Caco-2 (cell line): ENCODE measurements at regions of chr10 and their contacts with region 1.

Region 1: DNA sequence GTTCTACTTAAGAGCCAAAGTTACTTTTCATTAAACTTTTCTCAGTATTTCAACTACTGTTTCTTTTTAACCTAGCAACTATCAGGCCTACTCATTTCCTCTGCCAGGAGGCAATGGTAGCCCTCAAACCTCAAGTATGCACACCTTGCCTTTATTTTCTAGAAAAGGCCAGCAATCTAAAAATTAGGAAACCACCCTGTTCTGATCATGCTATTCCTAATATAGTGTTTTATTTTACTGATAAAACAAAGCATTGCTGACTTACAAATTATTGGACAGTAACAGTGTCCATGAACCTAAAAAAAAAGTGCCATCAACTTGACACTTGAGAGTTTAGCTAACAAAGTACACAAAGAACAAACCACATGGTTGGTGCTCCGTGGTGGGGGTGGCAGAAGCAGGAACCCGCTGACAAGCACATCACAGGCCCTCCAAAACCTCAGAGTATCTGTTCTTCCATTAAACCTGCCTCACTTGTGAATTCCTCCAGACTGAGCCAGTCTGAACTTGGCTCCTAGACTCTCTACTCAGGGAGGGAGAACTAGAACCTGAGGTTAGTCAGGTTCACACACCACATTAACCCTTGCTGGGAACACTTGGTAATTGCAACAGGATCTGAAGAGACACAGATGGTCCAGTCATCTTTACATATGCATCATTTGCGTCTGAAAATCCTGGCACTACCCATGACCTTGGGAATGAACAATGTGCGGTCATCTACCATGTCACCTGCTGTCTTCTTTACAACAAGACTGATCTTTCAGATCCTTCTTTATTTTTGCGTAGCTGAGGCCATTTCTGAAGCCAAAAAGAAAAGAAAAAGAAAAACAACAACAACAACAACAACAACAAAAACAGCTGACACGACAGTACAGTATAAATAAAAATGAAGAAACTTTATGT is 31.9 kb downstream of the PIP4K2A start:
- DNase-seq: no peak
- H3K4me3 ChIP-seq: no peak overlapping the region
- H3K4me3 Mint-ChIP-seq: peak overlapping the region; percentile 65
- H3K27ac Mint-ChIP-seq: peak overlapping the region; percentile 76
- H3K4me1 ChIP-seq: peaks cover 43% of the 10 kb centered on the region
- H3K4me1 Mint-ChIP-seq: peaks cover 37% of the 10 kb centered on the region
- H3K27me3 ChIP-seq: no peaks in the 10 kb centered on the region
- H3K27me3 Mint-ChIP-seq: no peaks in the 10 kb centered on the region
- CTCF ChIP-seq: no peak

Region 2: GRCh38 chr10:22391600-22391999 is 290.9 kb before region 1 on chr10:
- CTCF ChIA-PET with region 1: no interaction called
- POLR2A ChIA-PET with region 1: no interaction called
- intact Hi-C with region 1: no loop called
- DNase-seq: no peak
- H3K4me3 ChIP-seq: no peak overlapping the region
- H3K4me3 Mint-ChIP-seq: no peak overlapping the region
- H3K27ac Mint-ChIP-seq: peak overlapping the region; percentile 48
- H3K4me1 ChIP-seq: peaks cover 4% of the 10 kb centered on the region
- H3K4me1 Mint-ChIP-seq: peaks cover 24% of the 10 kb centered on the region
- H3K27me3 ChIP-seq: no peaks in the 10 kb centered on the region; the same call in 1 of the 2 replicates
- H3K27me3 Mint-ChIP-seq: no peaks in the 10 kb centered on the region
- CTCF ChIP-seq: no peak

Region 3: DNA sequence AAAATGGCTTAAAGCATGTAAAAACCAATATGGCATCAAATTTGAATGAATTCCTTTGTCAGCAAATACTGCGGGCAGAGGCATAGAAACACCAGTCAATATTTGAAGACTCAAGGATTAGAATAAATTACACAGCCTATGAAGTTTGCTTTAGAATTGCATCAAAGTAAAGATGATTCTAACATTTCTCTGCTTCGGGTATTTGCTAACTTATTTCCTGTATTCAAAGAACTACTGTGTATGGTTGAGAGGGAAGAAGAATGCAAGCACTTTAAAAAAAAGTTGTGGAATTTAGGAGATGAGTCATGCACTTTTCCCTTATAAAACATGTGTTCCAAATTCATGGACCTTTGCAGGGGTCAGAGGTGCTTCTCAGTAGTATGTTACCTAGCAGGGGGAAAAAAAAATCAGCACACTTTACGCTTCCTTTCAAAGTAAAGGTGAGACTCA is 58.2 kb before region 1 on chr10:
- CTCF ChIA-PET with region 1: no interaction called
- POLR2A ChIA-PET with region 1: no interaction called
- intact Hi-C with region 1: loop called (anchors 2 kb)
- DNase-seq: peak in 1 of 2 experiments; percentile 61
- H3K4me3 ChIP-seq: no peak overlapping the region
- H3K4me3 Mint-ChIP-seq: peak overlapping the region; percentile 25
- H3K27ac Mint-ChIP-seq: peak overlapping the region; percentile 64
- H3K4me1 ChIP-seq: peaks cover 67% of the 10 kb centered on the region
- H3K4me1 Mint-ChIP-seq: peaks cover 55% of the 10 kb centered on the region
- H3K27me3 ChIP-seq: no peaks in the 10 kb centered on the region
- H3K27me3 Mint-ChIP-seq: no peaks in the 10 kb centered on the region
- CTCF ChIP-seq: no peak

Region 4: DNA sequence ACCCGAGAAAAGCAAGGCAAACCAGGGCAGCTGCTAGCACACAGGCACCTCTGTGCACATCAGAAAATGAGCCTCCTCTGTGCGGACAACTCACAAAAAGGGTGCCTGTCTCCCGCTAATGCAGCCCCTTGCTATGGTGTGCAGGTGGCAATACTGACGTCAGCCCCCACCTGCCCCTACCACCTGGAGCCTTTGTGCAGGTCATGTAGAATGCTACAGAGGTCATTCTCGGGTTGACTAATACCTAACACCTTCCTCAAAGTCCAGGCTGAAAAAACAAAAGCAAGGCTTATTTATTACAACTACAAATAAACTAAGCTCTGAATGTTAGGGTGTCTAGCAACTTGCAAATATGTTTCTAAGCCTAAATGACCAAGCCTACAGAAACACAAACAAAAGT is 18.0 kb after region 1 on chr10:
- CTCF ChIA-PET with region 1: no interaction called
- POLR2A ChIA-PET with region 1: no interaction called
- intact Hi-C with region 1: loop called (anchors 1 kb)
- DNase-seq: no peak
- H3K4me3 ChIP-seq: no peak overlapping the region
- H3K4me3 Mint-ChIP-seq: no peak overlapping the region
- H3K27ac Mint-ChIP-seq: no peak overlapping the region
- H3K4me1 ChIP-seq: peaks cover 17% of the 10 kb centered on the region
- H3K4me1 Mint-ChIP-seq: peaks cover 16% of the 10 kb centered on the region
- H3K27me3 ChIP-seq: no peaks in the 10 kb centered on the region
- H3K27me3 Mint-ChIP-seq: no peaks in the 10 kb centered on the region
- CTCF ChIP-seq: no peak

Region 5: GRCh38 chr10:22714479-22715289 is 32.2 kb after region 1 on chr10 and contains the start of gene PIP4K2A:
- CTCF ChIA-PET with region 1: no interaction called
- POLR2A ChIA-PET with region 1: no interaction called
- intact Hi-C with region 1: loop called (anchors 1 kb)
- DNase-seq: peak; percentile 63 to 85
- H3K4me3 ChIP-seq: peak within 1 kb of the TSS; percentile 81
- H3K4me3 Mint-ChIP-seq: peak within 1 kb of the TSS; percentile 75
- H3K27ac Mint-ChIP-seq: no peak within 1 kb of the TSS
- H3K4me1 ChIP-seq: peaks cover 6% of the 10 kb centered on the region
- H3K4me1 Mint-ChIP-seq: no peaks in the 10 kb centered on the region
- H3K27me3 ChIP-seq: no peaks in the 10 kb centered on the region
- H3K27me3 Mint-ChIP-seq: no peaks in the 10 kb centered on the region
- CTCF ChIP-seq: no peak
- total RNA-seq, gene PIP4K2A: 25.2 and 26.9 TPM in 2 replicates